B cell (primary cell): ENCODE measurements at regions of chr12 and their contacts with region 1.

Region 1: DNA sequence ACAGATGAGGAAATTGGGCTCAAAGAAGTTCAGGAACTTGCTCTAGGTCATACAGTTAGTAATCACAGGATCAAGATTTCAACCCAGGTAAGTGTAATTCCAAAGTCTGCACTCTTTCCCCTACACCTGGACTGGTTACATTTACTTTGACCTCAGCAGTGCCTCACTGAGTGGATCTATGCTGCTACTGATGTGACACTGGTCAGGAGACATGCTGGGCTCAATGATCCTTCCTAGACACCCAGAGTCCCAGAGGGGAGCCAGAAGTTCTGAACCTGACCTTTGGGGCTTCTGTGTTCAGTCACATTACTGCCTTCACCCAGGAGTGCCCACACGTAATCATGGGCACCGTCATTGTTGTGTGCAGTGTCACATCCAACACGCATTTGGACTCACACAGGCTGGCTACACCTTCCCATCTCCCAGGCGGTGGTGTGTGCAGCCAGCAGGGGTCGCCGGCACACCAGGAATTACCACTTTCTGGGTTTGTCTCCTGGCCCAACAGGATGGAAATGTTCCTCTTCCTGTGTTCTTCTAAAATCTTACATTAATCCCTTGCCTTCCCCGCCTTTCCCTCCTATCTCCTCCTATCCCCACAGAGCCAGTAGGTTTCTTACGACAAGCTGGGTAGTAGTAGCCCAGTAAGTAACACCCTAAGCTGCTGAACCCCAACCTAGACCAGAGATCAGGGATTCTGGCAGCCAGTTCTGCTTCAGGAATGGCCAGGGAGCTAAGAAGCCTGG is 25.6 kb downstream of the CALCOCO1 start:
- DNase-seq: peak; percentile 77
- ATAC-seq: peak; percentile 81
- H3K4me3 ChIP-seq: no peak overlapping the region
- H3K4me3 Mint-ChIP-seq: no peak overlapping the region
- H3K27ac ChIP-seq: no peak overlapping the region
- H3K27ac Mint-ChIP-seq: no peak overlapping the region
- H3K4me1 ChIP-seq: peaks cover 5 to 9% of the 10 kb centered on the region in 2 donors
- H3K4me1 Mint-ChIP-seq: peaks cover 7% of the 10 kb centered on the region
- H3K27me3 ChIP-seq: peaks cover 0 to 55% (median 43%) of the 10 kb centered on the region in 4 experiments
- H3K27me3 Mint-ChIP-seq: peaks cover 74% of the 10 kb centered on the region
- CTCF ChIP-seq: peak; percentile 87

Region 2: GRCh38 chr12:53733051-53733806 is 31.5 kb after region 1 on chr12:
- CTCF ChIA-PET with region 1: interaction called, 10 read pairs
- POLR2A ChIA-PET with region 1: no interaction called
- intact Hi-C with region 1: no loop called
- DNase-seq: no peak
- ATAC-seq: no peak
- H3K4me3 ChIP-seq: no peak overlapping the region
- H3K4me3 Mint-ChIP-seq: no peak overlapping the region
- H3K27ac ChIP-seq: no peak overlapping the region
- H3K27ac Mint-ChIP-seq: no peak overlapping the region
- H3K4me1 ChIP-seq: peaks cover 2 to 5% of the 10 kb centered on the region in 2 donors
- H3K4me1 Mint-ChIP-seq: peaks cover 9% of the 10 kb centered on the region
- H3K27me3 ChIP-seq: peaks cover 0 to 43% (median 25%) of the 10 kb centered on the region in 4 experiments
- H3K27me3 Mint-ChIP-seq: peaks cover 59% of the 10 kb centered on the region
- CTCF ChIP-seq: no peak

Region 3: GRCh38 chr12:53738406-53739213 is 36.9 kb after region 1 on chr12:
- CTCF ChIA-PET with region 1: interaction called, 207 read pairs
- POLR2A ChIA-PET with region 1: no interaction called
- intact Hi-C with region 1: loop called (anchors 1 kb)
- DNase-seq: peak; percentile 58
- ATAC-seq: peak; percentile 75
- H3K4me3 ChIP-seq: peak overlapping the region in 4 of 5 experiments; percentile 15 to 45 (median 41)
- H3K4me3 Mint-ChIP-seq: peak overlapping the region; percentile 80
- H3K27ac ChIP-seq: no peak overlapping the region
- H3K27ac Mint-ChIP-seq: no peak overlapping the region
- H3K4me1 ChIP-seq: peaks cover 27 to 33% of the 10 kb centered on the region in 2 donors
- H3K4me1 Mint-ChIP-seq: peaks cover 24% of the 10 kb centered on the region
- H3K27me3 ChIP-seq: peaks cover 0 to 90% (median 59%) of the 10 kb centered on the region in 4 experiments
- H3K27me3 Mint-ChIP-seq: peaks cover 64% of the 10 kb centered on the region
- CTCF ChIP-seq: no peak

Region 4: DNA sequence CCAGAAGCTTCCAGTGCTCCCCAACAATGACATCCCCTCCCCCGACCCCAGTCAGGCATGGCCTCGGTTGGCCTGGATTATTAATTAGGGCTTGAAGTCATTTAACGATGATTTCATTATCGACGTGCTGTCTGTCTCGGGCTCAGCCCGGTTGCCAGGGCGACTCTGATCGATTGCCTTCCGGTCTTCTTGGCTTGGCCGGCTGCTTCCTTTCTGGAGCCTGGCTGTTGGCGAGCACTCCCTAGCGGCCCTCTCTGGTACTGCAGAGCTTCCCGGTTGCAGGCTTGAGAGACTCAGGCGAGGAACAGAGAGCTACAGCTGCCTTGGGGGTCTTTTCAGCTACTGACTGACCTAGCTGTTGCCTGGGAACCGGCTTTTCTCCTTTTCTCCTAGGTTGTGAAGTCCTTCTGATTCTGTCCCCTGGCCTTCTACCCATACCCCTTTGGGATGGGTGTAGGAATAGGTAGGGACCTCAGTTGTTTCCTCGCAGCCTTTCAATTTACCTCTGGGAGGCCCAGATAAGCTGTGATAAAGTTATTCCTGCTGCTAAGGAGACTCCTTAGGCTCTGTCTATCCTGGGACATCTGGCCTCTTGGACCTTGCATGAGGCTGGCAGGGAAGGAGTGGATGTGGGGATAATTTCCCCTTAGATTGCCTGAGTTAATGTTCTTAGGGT is 55.5 kb after region 1 on chr12:
- CTCF ChIA-PET with region 1: interaction called, 18 read pairs
- POLR2A ChIA-PET with region 1: no interaction called
- intact Hi-C with region 1: no loop called
- DNase-seq: peak; percentile 83
- ATAC-seq: peak; percentile 66
- H3K4me3 ChIP-seq: no peak overlapping the region
- H3K4me3 Mint-ChIP-seq: peak overlapping the region; percentile 54
- H3K27ac ChIP-seq: no peak overlapping the region
- H3K27ac Mint-ChIP-seq: no peak overlapping the region
- H3K4me1 ChIP-seq: peaks cover 53 to 61% of the 10 kb centered on the region in 2 donors
- H3K4me1 Mint-ChIP-seq: peaks cover 20% of the 10 kb centered on the region
- H3K27me3 ChIP-seq: peaks cover 0 to 34% (median 10%) of the 10 kb centered on the region in 4 experiments
- H3K27me3 Mint-ChIP-seq: peaks cover 34% of the 10 kb centered on the region
- CTCF ChIP-seq: peak; percentile 93

Region 5: DNA sequence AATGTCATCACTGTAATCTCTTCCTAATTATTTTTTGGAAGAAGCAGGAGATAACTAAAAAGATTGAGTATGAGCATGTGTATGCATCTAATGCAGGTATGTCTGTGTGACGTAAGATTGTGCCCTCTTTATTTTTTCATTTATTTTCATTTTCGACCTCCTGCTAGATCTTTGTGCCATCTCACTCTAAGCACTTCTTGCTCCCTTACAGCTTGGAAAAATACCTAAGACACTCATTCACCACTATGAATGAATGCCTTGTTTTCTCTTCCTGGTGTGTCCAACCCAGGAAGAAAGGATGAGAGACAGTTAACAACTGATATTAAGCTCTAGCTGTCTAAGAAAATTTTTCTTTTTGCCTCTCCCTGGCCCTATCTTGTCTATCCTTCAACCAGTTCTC is 126.9 kb after region 1 on chr12:
- CTCF ChIA-PET with region 1: no interaction called
- POLR2A ChIA-PET with region 1: no interaction called
- intact Hi-C with region 1: no loop called
- DNase-seq: no peak
- ATAC-seq: no peak
- H3K4me3 ChIP-seq: no peak overlapping the region
- H3K4me3 Mint-ChIP-seq: no peak overlapping the region
- H3K27ac ChIP-seq: no peak overlapping the region
- H3K27ac Mint-ChIP-seq: no peak overlapping the region
- H3K4me1 ChIP-seq: no peaks in the 10 kb centered on the region
- H3K4me1 Mint-ChIP-seq: no peaks in the 10 kb centered on the region
- H3K27me3 ChIP-seq: peaks cover 0 to 16% (median 3%) of the 10 kb centered on the region in 4 experiments
- H3K27me3 Mint-ChIP-seq: peaks cover 18% of the 10 kb centered on the region
- CTCF ChIP-seq: no peak

Region 6: GRCh38 chr12:53842686-53843085 is 141.0 kb after region 1 on chr12:
- CTCF ChIA-PET with region 1: no interaction called
- POLR2A ChIA-PET with region 1: no interaction called
- intact Hi-C with region 1: no loop called
- DNase-seq: no peak
- ATAC-seq: no peak
- H3K4me3 ChIP-seq: no peak overlapping the region
- H3K4me3 Mint-ChIP-seq: no peak overlapping the region
- H3K27ac ChIP-seq: no peak overlapping the region
- H3K27ac Mint-ChIP-seq: no peak overlapping the region
- H3K4me1 ChIP-seq: no peaks in the 10 kb centered on the region
- H3K4me1 Mint-ChIP-seq: no peaks in the 10 kb centered on the region
- H3K27me3 ChIP-seq: peaks cover 0 to 23% (median 1%) of the 10 kb centered on the region in 4 experiments
- H3K27me3 Mint-ChIP-seq: peaks cover 44% of the 10 kb centered on the region
- CTCF ChIP-seq: no peak